Posterior vena cava (tissue), 2 donors: ENCODE measurements at regions of chr6 and their contacts with region 1.

Region 1: DNA sequence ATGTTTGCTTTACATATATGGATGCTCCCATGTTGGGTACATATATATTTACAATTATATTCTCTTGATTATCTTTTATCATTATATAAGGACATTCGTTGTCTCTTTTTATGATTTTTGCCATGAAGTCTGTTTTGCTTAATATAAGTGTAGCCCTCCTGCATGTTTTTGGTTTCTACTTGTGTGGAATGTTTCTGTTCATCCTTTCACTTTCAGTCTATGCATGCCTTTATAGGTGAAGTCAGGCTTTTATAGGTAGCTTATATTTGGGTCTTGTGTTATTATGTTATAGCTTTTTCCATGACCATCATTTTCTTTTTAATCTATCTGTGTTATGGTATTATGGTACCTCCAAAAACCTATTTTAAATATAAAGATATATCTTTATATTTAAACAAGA is 612.5 kb upstream of the HS3ST5 start:
- DNase-seq: no peak

Region 2: GRCh38 chr6:114941078-114941477 is 14.3 kb before region 1 on chr6:
- intact Hi-C with region 1: loop called in 1 of 2 experiments (anchors 1 kb)
- DNase-seq: no peak